ENCODE measurements at regions of chr17 and their contacts with region 1.

Region 1: GRCh38 chr17:73156166-73156840 is 8.5 kb upstream of the SSTR2 start:
- DNase-seq: peak; percentile 46 to 80 (median 69)
- H3K4me3 ChIP-seq: no peak overlapping the region
- H3K27ac ChIP-seq: no peak overlapping the region
- H3K4me1 ChIP-seq: peaks cover 4% of the 10 kb centered on the region
- H3K27me3 ChIP-seq: no peaks in the 10 kb centered on the region
- CTCF ChIP-seq: peak; percentile 28 to 58 (median 47)
- EP300 ChIP-seq: no peak
- POLR2A ChIP-seq: no peak

Region 2: DNA sequence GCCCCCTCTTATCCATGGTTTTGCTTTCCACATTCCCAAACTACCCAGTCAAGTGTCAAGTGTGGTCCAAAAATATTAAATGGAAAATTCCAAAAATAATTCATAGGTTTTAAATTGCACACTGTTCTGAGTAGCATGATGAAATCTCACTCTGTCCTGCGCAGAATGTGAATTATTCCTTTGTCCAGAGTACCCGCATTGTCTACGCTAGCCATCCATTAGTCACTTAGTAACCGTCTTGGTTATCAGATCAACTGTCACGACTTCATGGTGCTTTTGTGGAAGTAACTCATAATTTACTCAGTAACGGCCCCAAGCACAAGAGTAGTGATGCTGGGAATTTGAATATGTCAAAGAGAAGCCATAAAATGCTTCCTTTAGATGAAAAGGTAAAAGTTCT is 158.7 kb before region 1 on chr17:
- intact Hi-C with region 1: loop called in 1 of 4 experiments (anchors 10 kb)
- DNase-seq: no peak
- H3K4me3 ChIP-seq: no peak overlapping the region
- H3K27ac ChIP-seq: no peak overlapping the region
- H3K4me1 ChIP-seq: no peaks in the 10 kb centered on the region
- H3K27me3 ChIP-seq: no peaks in the 10 kb centered on the region
- CTCF ChIP-seq: no peak
- EP300 ChIP-seq: no peak
- POLR2A ChIP-seq: no peak

Measured in ovary (tissue), 10 donors.